ENCODE measurements at regions of chr11 and their contacts with region 1.

Region 1: DNA sequence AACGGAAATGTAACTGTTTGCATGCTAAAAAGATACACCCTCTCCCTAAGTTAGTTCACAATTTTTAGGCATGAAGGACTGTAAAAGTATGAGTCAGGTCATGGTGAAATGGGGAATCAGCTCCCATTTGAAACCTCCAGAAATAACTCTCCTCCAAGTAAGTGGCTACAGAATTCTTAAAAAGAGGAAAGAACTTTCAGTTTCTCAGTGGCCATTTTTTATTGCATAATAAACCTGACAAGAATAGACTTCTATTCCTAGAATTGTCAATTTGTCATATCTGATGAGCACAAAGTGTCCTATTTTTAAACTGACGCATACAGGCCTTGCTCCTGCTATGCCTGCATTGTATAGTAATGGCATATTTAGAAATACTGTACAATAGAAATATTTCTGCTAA is 612.2 kb downstream of the CNTN5 start:
- DNase-seq: no peak
- ATAC-seq: no peak

Region 2: DNA sequence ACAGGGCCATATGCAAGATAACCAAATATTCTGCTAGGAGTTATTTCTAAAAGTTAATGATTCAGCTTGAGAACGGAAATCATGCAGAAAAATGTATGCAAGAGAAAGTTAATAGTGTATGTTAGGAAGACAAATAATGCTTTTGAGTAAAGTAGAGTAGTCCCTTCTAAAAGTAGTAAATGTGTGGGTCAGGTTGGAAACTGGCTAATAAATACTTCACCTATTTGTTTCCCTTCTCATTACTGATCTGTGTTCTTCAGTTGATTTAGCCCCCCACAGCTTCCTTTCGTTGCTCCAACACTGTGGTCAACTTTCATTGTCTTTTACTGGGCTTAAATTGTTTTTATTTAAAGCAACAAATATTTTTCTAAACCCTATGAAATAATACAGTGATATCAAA is 168.0 kb before region 1 on chr11:
- intact Hi-C with region 1: loop called in 1 of 2 experiments (anchors 10 kb)
- DNase-seq: no peak
- ATAC-seq: no peak